WTC11 (cell line): ENCODE measurements at regions of chr11 and their contacts with region 1.

Region 1: DNA sequence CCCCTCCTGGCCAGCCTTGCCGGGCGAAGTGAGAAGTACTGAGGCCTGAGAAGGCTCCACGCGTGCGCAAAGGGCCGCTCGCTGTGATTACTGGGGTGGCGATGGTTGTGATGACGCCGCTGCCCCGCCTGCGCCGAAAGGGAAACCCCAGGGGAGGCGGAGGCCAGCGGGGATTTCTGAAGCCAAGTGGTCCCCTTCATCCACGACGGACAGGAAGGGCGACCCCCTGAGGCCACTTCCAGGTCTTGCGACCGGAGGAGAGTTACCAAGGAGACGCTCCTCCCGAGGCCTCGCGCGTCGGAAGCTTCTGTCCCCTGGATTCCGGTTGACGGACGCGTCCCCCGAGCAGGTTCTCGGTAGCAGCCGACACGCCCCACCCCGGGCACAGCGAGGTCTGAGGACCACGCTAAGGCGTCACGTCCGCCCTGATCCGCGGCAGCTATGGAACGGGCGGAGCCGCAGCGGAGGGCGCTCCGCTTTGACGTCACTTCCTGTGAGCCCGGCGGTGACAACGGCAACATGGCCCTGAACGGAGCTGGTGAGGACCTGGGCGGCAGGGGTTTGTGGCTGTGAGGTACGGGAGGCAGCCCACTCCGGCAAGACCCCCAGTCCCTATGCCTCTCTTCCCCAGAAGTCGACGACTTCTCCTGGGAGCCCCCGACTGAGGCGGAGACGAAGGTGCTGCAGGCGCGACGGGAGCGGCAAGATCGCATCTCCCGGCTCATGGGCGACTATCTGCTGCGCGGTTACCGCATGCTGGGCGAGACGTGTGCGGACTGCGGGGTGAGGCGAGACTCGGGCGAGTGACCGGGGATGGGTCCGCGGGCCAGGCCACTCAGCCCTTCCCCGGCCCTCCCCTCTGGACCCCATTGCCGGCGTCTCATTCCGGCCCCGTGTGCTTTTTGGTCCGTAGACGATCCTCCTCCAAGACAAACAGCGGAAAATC is at the start of gene ZNRD2:
- DNase-seq: peak; percentile 98
- ATAC-seq: peak; percentile 75
- H3K4me3 Mint-ChIP-seq: peak within 1 kb of the TSS; percentile 99
- H3K27ac Mint-ChIP-seq: peak within 1 kb of the TSS; percentile 98
- H3K4me1 Mint-ChIP-seq: peaks cover 41% of the 10 kb centered on the region
- H3K27me3 Mint-ChIP-seq: peaks cover 7% of the 10 kb centered on the region
- CTCF ChIP-seq: no peak; the same call in 1 of the 2 replicates
- total RNA-seq, gene ZNRD2: 54.8 to 70.9 TPM (median 55.7 TPM) in 3 replicates

Region 2: GRCh38 chr11:65308281-65309093 is 261.8 kb before region 1 on chr11:
- CTCF ChIA-PET with region 1: no interaction called
- POLR2A ChIA-PET with region 1: no interaction called
- DNase-seq: no peak
- ATAC-seq: no peak
- H3K4me3 Mint-ChIP-seq: no peak overlapping the region
- H3K27ac Mint-ChIP-seq: no peak overlapping the region
- H3K4me1 Mint-ChIP-seq: peaks cover 6% of the 10 kb centered on the region
- H3K27me3 Mint-ChIP-seq: peaks cover 46% of the 10 kb centered on the region
- CTCF ChIP-seq: no peak

Region 3: DNA sequence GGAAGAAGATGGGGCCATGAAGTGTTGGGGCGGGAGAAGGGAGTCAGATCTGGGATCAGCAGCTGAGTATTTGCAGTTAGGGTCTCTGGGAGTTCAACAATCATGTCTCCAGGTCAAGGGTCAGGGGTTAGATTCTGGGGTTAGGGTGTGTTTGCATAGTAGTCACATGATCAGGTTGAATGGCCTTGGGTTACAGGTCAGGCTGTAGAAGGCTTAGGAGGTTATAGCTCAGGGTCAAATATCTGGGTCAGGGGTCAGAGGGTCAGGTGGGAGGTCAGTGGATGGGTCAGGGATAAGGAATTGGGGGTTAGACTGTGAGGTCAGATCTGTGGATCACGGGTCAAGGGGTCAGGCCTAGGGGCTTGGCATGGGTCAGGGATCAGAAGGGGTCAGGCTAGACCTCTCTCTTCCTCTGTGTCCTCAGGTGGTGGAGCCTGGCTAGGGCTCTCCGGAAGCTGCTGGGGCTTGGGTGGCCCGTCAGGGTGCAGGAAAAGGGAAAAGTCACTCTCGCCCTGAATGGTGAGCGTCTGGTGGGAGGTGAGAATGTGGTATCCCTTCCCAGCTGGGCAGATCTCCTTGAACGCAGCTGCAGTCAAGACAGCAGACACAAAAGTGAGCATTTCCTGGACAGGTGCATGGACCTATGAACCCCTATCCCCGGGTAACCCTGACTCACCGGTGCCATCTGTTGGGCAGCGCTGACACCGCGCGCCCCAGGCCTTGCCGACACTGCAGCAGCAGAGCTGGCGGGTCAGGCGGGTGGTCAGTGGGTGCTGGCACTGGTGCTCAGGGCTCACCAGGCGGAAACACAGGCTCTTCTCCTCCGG is 18.5 kb before region 1 on chr11:
- CTCF ChIA-PET with region 1: interaction called, 270 read pairs
- POLR2A ChIA-PET with region 1: interaction called, 4 read pairs
- DNase-seq: peak; percentile 89
- ATAC-seq: peak; percentile 64
- H3K4me3 Mint-ChIP-seq: peak overlapping the region; percentile 36; the same call in 1 of the 2 replicates
- H3K27ac Mint-ChIP-seq: no peak overlapping the region
- H3K4me1 Mint-ChIP-seq: peaks cover 42% of the 10 kb centered on the region
- H3K27me3 Mint-ChIP-seq: peaks cover 80% of the 10 kb centered on the region
- CTCF ChIP-seq: peak; percentile 49; the same call in 1 of the 2 replicates

Region 4: GRCh38 chr11:65558002-65558931 is 12.0 kb before region 1 on chr11 and contains the start of gene LTBP3:
- CTCF ChIA-PET with region 1: interaction called, 110 read pairs
- POLR2A ChIA-PET with region 1: interaction called, 10 read pairs
- DNase-seq: peak; percentile 60
- ATAC-seq: peak; percentile 32
- H3K4me3 Mint-ChIP-seq: peak within 1 kb of the TSS; percentile 69
- H3K27ac Mint-ChIP-seq: peak within 1 kb of the TSS; percentile 33; the same call in 1 of the 2 replicates
- H3K4me1 Mint-ChIP-seq: peaks cover 50% of the 10 kb centered on the region
- H3K27me3 Mint-ChIP-seq: peaks cover 62% of the 10 kb centered on the region
- CTCF ChIP-seq: no peak
- total RNA-seq, gene LTBP3: 15.9 to 23.6 TPM (median 20.7 TPM) in 3 replicates

Region 5: GRCh38 chr11:65588199-65589054 is 18.2 kb after region 1 on chr11:
- CTCF ChIA-PET with region 1: interaction called, 239 read pairs
- POLR2A ChIA-PET with region 1: interaction called, 6 read pairs
- DNase-seq: peak; percentile 80
- ATAC-seq: peak; percentile 49
- H3K4me3 Mint-ChIP-seq: no peak overlapping the region
- H3K27ac Mint-ChIP-seq: 0 out of 2 replicates have a peak overlapping the region, but pooled peaks have one; percentile 19
- H3K4me1 Mint-ChIP-seq: peaks cover 37% of the 10 kb centered on the region
- H3K27me3 Mint-ChIP-seq: peaks cover 77% of the 10 kb centered on the region
- CTCF ChIP-seq: peak; percentile 49

Region 6: DNA sequence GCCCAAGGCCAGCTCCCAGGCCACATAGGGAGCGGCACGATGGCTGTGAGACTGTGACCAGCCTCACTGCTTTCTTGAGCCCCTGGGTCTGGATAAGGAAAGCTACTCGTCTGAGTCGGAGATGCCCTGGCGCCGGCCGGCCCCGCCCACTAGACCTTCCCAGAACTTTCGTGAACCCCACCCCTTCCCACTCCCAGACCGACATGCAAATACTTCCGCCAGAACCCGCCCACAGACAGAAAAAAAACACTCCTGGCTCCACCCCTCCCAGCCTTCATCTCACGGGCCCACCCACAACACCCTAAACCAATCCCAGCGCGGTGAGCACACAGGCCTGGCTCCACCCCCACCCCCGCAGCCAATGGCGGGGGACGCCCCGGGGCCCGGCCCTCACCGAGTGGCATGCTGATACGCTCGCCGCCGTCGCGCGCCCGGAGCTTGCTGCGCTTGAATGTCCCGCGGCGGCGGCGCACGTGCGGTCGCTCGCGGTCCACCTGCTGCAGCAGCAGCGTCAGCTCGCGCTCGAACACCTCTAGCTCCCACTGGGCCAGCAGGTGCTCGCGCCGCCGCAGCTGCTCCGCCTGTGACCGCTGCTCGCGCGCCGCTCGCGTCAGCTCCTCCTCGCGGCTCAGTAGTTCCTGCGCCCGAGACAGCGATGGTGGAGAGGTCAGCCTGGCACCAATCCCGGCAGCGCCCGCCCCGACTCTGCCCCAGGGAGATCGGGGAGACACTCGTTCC is 36.8 kb after region 1 on chr11:
- CTCF ChIA-PET with region 1: interaction called, 11 read pairs
- POLR2A ChIA-PET with region 1: interaction called, 6 read pairs
- DNase-seq: peak; percentile 97
- ATAC-seq: peak; percentile 98
- H3K4me3 Mint-ChIP-seq: peak overlapping the region; percentile 70
- H3K27ac Mint-ChIP-seq: peak overlapping the region; percentile 65; the same call in 1 of the 2 replicates
- H3K4me1 Mint-ChIP-seq: peaks cover 18% of the 10 kb centered on the region
- H3K27me3 Mint-ChIP-seq: peaks cover 8% of the 10 kb centered on the region; the same call in 1 of the 2 replicates
- CTCF ChIP-seq: no peak

Region 7: GRCh38 chr11:65615229-65615941 is 45.1 kb after region 1 on chr11 and contains the start of gene PCNX3:
- CTCF ChIA-PET with region 1: interaction called, 10 read pairs
- POLR2A ChIA-PET with region 1: interaction called, 3 read pairs
- DNase-seq: peak; percentile 100
- ATAC-seq: peak; percentile 91
- H3K4me3 Mint-ChIP-seq: peak within 1 kb of the TSS; percentile 94
- H3K27ac Mint-ChIP-seq: peak within 1 kb of the TSS; percentile 98
- H3K4me1 Mint-ChIP-seq: peaks cover 21% of the 10 kb centered on the region
- H3K27me3 Mint-ChIP-seq: no peaks in the 10 kb centered on the region; the same call in 1 of the 2 replicates
- CTCF ChIP-seq: no peak
- total RNA-seq, gene PCNX3: 44.6 to 51.6 TPM (median 45.8 TPM) in 3 replicates